Psoas muscle (tissue), 8 donors: ENCODE measurements at regions of chr12 and their contacts with region 1.

Region 1: GRCh38 chr12:93347054-93347776 is 30.5 kb upstream of the NUDT4 start:
- DNase-seq: no peak
- ATAC-seq: no peak
- H3K4me3 ChIP-seq: no peak overlapping the region
- H3K27ac ChIP-seq: no peak overlapping the region
- H3K4me1 ChIP-seq: peaks cover 9% of the 10 kb centered on the region
- H3K27me3 ChIP-seq: no peaks in the 10 kb centered on the region
- CTCF ChIP-seq: no peak

Region 2: GRCh38 chr12:93279565-93280412 is 67.4 kb before region 1 on chr12:
- intact Hi-C with region 1: no loop called
- DNase-seq: no peak
- ATAC-seq: no peak
- H3K4me3 ChIP-seq: no peak overlapping the region
- H3K27ac ChIP-seq: no peak overlapping the region
- H3K4me1 ChIP-seq: peaks cover 17% of the 10 kb centered on the region
- H3K27me3 ChIP-seq: no peaks in the 10 kb centered on the region
- CTCF ChIP-seq: no peak

Region 3: DNA sequence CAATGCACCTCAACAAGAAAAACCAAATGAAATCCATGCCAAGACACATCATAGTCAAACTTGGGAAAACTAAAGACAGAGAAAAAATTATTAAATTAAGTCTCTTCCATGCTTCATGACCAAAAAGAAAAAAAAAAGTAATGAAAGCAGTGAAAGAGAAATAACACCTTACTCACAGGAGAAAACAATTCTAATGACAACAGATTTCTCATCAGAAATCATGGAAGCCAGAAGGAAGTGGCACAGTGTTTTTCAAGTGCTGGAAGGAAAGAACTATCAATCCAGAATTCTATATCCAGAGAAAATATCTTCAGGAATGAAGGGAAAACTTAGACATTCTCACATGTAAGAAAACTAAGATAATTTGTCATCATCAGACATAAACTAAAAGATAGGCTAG is 40.6 kb before region 1 on chr12:
- intact Hi-C with region 1: loop called in 1 of 2 experiments (anchors 5 kb)
- DNase-seq: no peak
- ATAC-seq: no peak
- H3K4me3 ChIP-seq: no peak overlapping the region
- H3K27ac ChIP-seq: no peak overlapping the region
- H3K4me1 ChIP-seq: peaks cover 15% of the 10 kb centered on the region
- H3K27me3 ChIP-seq: no peaks in the 10 kb centered on the region
- CTCF ChIP-seq: no peak

Region 4: DNA sequence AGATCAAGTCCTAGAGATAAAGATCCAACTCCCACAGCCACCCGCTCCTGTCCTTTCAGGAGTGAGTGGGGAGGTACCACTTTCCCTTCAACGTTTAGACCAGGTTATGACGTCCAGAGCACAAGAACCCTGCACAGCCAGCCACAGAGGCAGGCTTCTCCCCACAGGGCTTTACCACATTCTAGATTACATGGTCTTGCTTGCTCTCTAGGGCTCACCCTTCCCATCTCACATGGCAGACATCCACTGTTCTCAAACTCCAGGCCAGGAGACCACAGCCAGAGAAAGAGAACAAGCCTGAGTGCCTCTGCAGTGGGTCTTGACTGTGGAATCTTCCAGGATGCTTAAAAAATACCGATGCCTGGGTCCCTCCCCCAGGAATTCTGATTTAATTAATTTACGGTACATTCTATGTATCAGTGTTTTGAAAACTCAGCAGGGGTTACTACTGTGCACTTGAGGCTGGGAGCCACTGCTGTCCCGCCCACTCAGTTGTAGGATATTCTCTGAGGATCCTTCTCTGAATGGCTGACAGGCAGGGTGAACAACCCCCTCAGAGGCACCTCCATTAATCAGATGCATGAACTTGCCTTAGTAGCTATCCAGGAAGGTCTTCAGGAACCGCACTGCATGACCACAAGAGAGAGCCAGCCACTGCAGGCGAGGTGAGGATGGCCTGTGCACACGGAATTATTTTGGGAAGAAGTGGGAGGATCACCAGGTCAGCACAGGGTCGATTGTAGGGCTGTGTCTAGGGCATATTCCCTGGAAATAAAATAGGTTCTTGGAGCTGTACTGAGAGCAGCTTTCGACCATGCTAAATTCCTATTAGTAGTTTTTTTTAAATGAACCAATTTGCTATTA is 203.8 kb after region 1 on chr12:
- intact Hi-C with region 1: no loop called
- DNase-seq: no peak
- ATAC-seq: no peak
- H3K4me3 ChIP-seq: no peak overlapping the region
- H3K27ac ChIP-seq: no peak overlapping the region
- H3K4me1 ChIP-seq: no peaks in the 10 kb centered on the region
- H3K27me3 ChIP-seq: no peaks in the 10 kb centered on the region
- CTCF ChIP-seq: no peak